ENCODE measurements at regions of chr9 and their contacts with region 1.

Region 1: DNA sequence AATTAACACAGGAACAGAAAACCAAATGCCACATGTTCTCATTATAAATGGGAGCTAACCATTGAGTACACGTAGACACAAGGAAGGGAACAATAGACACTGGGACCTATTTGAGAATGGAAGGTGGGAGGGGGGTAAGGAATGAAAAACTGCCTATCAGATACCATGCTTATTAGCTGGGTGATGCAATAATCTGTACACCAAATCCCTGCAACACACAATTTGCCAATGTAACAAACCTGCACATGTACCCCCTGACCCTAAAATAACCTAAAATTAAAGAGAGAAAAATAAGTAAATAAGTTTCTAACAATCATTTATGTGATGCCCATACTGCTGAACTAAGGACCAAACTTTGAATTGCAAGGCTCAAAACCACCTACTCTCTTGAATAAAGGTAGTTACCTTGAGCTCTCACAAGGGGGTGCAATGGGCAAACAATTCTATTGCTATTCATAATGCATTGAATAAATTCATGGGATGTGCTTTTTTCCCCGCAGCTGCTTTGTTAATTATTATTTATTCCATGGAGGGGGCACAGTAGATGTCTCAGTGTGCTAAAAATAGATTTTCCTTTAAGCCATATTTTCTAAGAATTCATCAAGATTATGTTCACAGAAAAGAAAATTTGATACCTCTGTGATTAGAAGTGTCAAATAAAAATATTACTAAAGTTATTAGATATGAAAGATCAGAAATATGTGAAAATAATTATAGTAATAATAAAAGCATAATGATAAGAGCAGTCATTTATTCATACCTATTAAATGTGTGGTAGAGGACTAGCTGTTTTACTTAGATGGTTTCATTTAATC is 76.2 kb upstream of the PTPN3 start:
- DNase-seq: peak; percentile 52
- H3K4me3 ChIP-seq: no peak overlapping the region
- H3K27ac ChIP-seq: no peak overlapping the region
- H3K4me1 ChIP-seq: no peaks in the 10 kb centered on the region
- H3K27me3 ChIP-seq: no peaks in the 10 kb centered on the region
- CTCF ChIP-seq: peak; percentile 37 to 47
- POLR2A ChIP-seq: no peak

Region 2: DNA sequence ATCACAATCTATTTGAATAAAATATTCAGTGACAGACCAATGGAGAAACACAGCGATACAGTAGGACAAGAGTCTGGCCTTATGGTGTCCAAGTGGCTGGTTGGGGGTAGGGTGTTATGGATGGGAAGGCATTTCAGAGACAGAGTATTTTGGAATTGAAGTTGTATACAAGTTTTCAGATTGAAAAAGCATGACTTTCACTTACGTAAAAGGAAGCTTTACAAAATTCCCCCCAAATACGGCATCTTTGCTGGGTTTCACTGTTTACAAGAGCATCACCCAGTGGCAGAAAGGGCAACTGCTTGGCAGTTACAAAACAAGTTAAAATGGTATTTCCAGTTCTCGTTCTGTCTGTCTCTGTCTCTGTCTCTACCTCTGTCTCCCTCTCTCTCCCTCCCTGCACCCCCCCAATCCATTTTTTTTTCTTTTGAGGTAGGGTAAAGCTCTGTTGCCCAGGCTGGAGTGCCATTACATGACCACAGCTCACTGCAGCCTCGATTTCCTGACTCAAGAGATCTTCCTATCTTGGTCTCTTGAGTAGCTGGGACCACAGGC is 162.4 kb before region 1 on chr9:
- CTCF ChIA-PET with region 1: no interaction called
- POLR2A ChIA-PET with region 1: no interaction called
- dilution Hi-C with region 1: no loop called
- intact Hi-C with region 1: no loop called
- DNase-seq: no peak
- H3K4me3 ChIP-seq: no peak overlapping the region
- H3K27ac ChIP-seq: no peak overlapping the region
- H3K4me1 ChIP-seq: no peaks in the 10 kb centered on the region
- H3K27me3 ChIP-seq: no peaks in the 10 kb centered on the region
- CTCF ChIP-seq: peak; percentile 49 to 50
- POLR2A ChIP-seq: no peak

Region 3: GRCh38 chr9:109560457-109561132 is 13.7 kb before region 1 on chr9:
- CTCF ChIA-PET with region 1: interaction called, 16 read pairs
- POLR2A ChIA-PET with region 1: no interaction called
- dilution Hi-C with region 1: no loop called
- intact Hi-C with region 1: no loop called
- DNase-seq: no peak
- H3K4me3 ChIP-seq: no peak overlapping the region
- H3K27ac ChIP-seq: no peak overlapping the region
- H3K4me1 ChIP-seq: no peaks in the 10 kb centered on the region
- H3K27me3 ChIP-seq: no peaks in the 10 kb centered on the region
- CTCF ChIP-seq: no peak
- POLR2A ChIP-seq: no peak

Region 4: DNA sequence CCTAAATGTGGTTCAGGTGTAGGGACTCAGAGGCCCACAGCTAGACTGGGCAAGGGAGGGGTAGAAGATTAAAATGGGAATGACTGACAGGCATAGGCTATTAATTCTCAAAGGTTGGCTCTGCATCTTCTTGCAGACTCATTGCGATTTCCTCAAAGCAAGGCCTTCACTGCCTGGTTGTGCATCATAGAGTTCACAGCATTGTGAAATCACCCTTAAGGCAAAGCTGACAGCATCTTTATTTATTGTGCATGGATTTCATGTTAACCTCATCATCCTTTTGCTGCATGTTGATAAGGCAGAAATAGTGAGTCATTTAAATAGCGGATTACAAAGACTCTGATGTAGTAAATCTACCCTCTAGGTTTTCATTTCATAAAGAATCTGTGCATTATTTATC is 192.1 kb after region 1 on chr9:
- CTCF ChIA-PET with region 1: no interaction called
- POLR2A ChIA-PET with region 1: no interaction called
- dilution Hi-C with region 1: no loop called
- intact Hi-C with region 1: no loop called
- DNase-seq: no peak
- H3K4me3 ChIP-seq: no peak overlapping the region
- H3K27ac ChIP-seq: no peak overlapping the region
- H3K4me1 ChIP-seq: no peaks in the 10 kb centered on the region
- H3K27me3 ChIP-seq: peaks cover 0 to 3% of the 10 kb centered on the region in 2 experiments
- CTCF ChIP-seq: no peak
- POLR2A ChIP-seq: no peak

Region 5: GRCh38 chr9:109887079-109887478 is 312.8 kb after region 1 on chr9:
- CTCF ChIA-PET with region 1: interaction called, 5 read pairs
- POLR2A ChIA-PET with region 1: no interaction called
- dilution Hi-C with region 1: no loop called
- intact Hi-C with region 1: loop called (anchors 5 kb)
- DNase-seq: peak; percentile 9
- H3K4me3 ChIP-seq: no peak overlapping the region
- H3K27ac ChIP-seq: no peak overlapping the region
- H3K4me1 ChIP-seq: no peaks in the 10 kb centered on the region
- H3K27me3 ChIP-seq: peaks cover 0 to 3% of the 10 kb centered on the region in 2 experiments
- CTCF ChIP-seq: no peak
- POLR2A ChIP-seq: no peak

Region 6: DNA sequence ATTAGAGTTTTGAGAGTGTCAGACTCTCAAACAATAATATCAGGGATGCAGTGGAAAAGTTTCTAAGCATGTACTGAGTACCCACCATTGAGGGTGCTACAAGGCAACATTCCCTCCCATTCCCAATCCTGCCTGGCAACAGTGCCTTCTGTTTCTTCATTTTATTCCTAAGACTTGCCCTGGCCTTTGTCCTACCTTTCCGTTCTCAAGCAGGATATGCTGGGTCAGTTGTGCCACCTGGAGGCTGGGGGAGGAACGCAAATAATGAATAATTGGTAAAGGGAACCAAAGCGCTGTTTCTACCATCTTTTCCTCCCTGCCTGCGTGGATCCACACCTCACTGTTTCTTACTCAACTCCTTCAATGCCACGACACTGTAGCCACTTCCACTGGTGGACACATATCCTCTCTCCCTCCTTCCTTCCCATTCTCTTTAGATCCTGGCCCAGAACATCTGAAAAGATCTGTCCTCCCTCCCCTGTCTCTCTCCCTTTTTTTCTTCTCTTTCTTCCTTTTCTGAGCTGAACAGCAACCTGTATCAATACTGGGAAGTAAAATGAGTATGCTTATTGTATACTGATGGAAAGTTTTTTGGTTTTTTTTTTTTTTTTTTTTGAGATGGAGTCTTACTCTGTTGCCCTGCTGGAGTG is 484.2 kb after region 1 on chr9:
- CTCF ChIA-PET with region 1: no interaction called
- POLR2A ChIA-PET with region 1: no interaction called
- dilution Hi-C with region 1: no loop called
- intact Hi-C with region 1: loop called (anchors 5 kb)
- DNase-seq: peak; percentile 82
- H3K4me3 ChIP-seq: no peak overlapping the region
- H3K27ac ChIP-seq: peak overlapping the region; percentile 30
- H3K4me1 ChIP-seq: peaks cover 30% of the 10 kb centered on the region
- H3K27me3 ChIP-seq: no peaks in the 10 kb centered on the region
- CTCF ChIP-seq: peak; percentile 37 to 46
- POLR2A ChIP-seq: peak; percentile 31

Region 7: DNA sequence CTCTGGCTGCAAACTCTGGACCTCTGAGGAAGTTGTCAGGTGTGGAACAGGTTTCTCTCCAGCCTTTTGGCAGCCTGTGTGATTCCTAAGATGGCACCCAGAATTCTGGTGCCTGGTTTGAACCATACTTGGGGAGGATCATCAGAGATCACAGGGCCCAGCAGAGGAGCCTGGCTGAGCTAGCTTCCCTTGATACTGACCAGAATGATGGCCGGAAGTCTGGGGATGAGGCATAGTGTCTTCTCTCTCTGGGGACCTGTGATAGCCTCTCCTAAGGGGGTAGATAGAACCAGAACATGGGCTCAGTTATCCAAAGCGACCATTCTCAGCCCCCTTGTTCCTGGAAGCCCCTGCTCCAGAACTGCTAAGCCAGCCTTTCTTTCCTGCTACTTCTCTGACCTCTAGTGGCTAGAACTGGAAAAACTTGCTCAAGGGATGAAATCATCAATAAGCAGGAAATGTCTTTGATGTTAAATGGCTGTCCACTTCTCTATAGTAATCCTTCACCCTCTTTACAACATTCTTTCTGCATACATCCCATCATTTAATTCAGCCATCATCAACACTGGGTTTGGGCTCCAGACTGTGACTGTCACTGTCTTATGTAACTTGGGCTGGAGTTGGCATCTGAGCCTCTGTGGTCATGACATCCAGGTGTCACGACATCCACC is 578.6 kb after region 1 on chr9:
- CTCF ChIA-PET with region 1: interaction called, 10 read pairs
- POLR2A ChIA-PET with region 1: no interaction called
- dilution Hi-C with region 1: no loop called
- intact Hi-C with region 1: no loop called
- DNase-seq: peak; percentile 84
- H3K4me3 ChIP-seq: no peak overlapping the region
- H3K27ac ChIP-seq: peak overlapping the region; percentile 36
- H3K4me1 ChIP-seq: peaks cover 13% of the 10 kb centered on the region
- H3K27me3 ChIP-seq: no peaks in the 10 kb centered on the region
- CTCF ChIP-seq: peak; percentile 63 to 65
- POLR2A ChIP-seq: no peak

Region 8: DNA sequence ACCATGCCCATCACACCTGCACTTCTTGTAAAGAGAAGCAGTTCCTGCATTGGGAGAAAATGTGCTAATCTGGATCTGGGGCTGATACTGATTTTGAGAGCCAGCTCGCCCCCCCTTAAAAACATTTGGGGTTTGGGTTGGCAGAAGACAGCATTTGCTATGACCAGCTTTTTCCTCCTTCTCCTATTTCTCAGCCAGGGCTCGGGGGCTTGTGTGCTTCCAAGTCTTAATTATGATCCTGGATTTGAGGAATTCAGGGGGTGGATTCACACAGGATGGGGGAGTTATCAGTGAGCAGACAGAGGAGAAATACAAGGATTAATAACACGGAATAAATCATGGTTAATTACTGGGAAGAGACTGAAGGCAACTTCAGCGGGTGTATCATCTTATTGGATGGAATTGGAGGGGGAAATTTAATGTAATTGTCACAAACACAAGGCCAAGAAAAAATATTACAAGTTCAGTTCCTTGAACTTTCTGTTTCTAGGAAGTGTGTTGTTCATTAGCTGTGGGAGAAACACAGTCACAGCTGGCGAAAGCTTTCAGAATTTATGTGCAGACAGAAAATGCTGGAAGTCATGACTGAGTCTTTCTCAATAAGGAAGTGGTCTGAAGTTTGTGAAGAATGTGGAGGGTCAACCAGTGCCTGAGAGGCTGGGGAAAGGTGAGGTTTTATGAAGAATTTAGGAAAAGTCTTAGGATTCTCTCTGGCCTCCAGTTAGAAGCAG is 618.4 kb after region 1 on chr9:
- CTCF ChIA-PET with region 1: interaction called, 13 read pairs
- POLR2A ChIA-PET with region 1: no interaction called
- dilution Hi-C with region 1: no loop called
- intact Hi-C with region 1: no loop called
- DNase-seq: peak; percentile 67
- H3K4me3 ChIP-seq: no peak overlapping the region
- H3K27ac ChIP-seq: no peak overlapping the region
- H3K4me1 ChIP-seq: no peaks in the 10 kb centered on the region
- H3K27me3 ChIP-seq: no peaks in the 10 kb centered on the region
- CTCF ChIP-seq: no peak
- POLR2A ChIP-seq: no peak

Region 9: DNA sequence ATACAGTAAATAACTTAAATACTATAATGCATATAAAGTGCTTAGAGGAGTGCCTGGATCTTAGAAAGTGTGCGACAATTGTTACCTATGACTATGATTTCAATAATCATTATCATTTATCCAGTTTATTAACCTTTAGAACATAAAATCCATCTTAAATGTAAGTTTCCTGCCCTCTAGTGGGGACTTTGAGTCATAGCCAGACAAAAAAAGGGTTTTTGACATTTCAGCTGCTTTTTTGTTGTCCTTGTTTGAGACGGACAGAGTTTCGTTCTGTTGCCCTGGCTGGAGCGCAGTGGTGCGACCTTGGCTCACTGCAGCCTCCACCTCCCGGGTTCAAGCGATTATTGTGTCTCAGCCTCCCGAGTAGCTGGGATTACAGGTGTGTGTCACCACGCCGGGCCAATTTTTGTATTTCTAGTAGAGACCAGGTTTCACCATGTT is 643.4 kb after region 1 on chr9:
- CTCF ChIA-PET with region 1: interaction called, 25 read pairs
- POLR2A ChIA-PET with region 1: no interaction called
- dilution Hi-C with region 1: no loop called
- intact Hi-C with region 1: loop called (anchors 1 kb)
- DNase-seq: peak; percentile 65
- H3K4me3 ChIP-seq: no peak overlapping the region
- H3K27ac ChIP-seq: no peak overlapping the region
- H3K4me1 ChIP-seq: no peaks in the 10 kb centered on the region
- H3K27me3 ChIP-seq: peaks cover 4 to 11% of the 10 kb centered on the region in 2 experiments
- CTCF ChIP-seq: peak; percentile 47 to 62
- POLR2A ChIP-seq: no peak